Activated naive CD4-positive, alpha-beta T cell treated with anti-CD3 and anti-CD28 coated beads for 36 hours (primary cell): ENCODE measurements at regions of chr6 and their contacts with region 1.

Region 1: GRCh38 chr6:90444160-90444714 is 142.6 kb downstream of the MAP3K7 start:
- DNase-seq: no peak
- H3K4me3 Mint-ChIP-seq: peak overlapping the region; percentile 62
- H3K27ac Mint-ChIP-seq: peak overlapping the region; percentile 95
- H3K4me1 Mint-ChIP-seq: peaks cover 56% of the 10 kb centered on the region
- H3K27me3 Mint-ChIP-seq: no peaks in the 10 kb centered on the region

Region 2: GRCh38 chr6:89412071-89413005 is 1031.9 kb before region 1 on chr6 and contains the start of gene RRAGD:
- CTCF ChIA-PET with region 1: no interaction called
- intact Hi-C with region 1: no loop called
- DNase-seq: peak; percentile 67
- H3K4me3 Mint-ChIP-seq: peak within 1 kb of the TSS; percentile 91
- H3K27ac Mint-ChIP-seq: peak within 1 kb of the TSS; percentile 31
- H3K4me1 Mint-ChIP-seq: peaks cover 23% of the 10 kb centered on the region
- H3K27me3 Mint-ChIP-seq: peaks cover 4% of the 10 kb centered on the region
- total RNA-seq, gene RRAGD: 11.3 to 13.2 TPM

Region 3: DNA sequence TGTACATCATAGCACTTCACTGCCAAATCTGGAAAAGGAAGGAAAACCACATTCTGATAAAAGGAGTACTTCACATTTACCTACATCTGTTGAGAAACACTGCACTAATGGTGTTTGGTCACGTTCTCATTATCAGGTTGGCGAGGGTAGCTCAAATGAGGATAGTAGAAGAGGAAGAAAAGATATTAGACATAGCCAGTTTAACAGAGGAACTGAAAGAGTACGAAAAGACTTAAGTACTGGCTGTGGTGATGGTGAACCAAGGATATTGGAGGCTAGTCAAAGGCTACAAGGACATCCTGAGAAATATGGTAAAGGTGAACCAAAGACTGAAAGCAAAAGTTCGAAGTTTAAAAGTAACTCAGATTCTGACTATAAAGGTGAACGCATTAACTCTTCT is 582.0 kb before region 1 on chr6:
- CTCF ChIA-PET with region 1: no interaction called
- intact Hi-C with region 1: no loop called
- DNase-seq: no peak
- H3K4me3 Mint-ChIP-seq: no peak overlapping the region
- H3K27ac Mint-ChIP-seq: no peak overlapping the region
- H3K4me1 Mint-ChIP-seq: peaks cover 3% of the 10 kb centered on the region
- H3K27me3 Mint-ChIP-seq: no peaks in the 10 kb centered on the region

Region 4: GRCh38 chr6:90403489-90404381 is 40.5 kb before region 1 on chr6:
- CTCF ChIA-PET with region 1: interaction called, 3 read pairs
- intact Hi-C with region 1: loop called (anchors 1 kb)
- DNase-seq: no peak
- H3K4me3 Mint-ChIP-seq: peak overlapping the region; percentile 57
- H3K27ac Mint-ChIP-seq: peak overlapping the region; percentile 87
- H3K4me1 Mint-ChIP-seq: peaks cover 86% of the 10 kb centered on the region
- H3K27me3 Mint-ChIP-seq: no peaks in the 10 kb centered on the region

Region 5: GRCh38 chr6:90425161-90425641 is 19.0 kb before region 1 on chr6:
- CTCF ChIA-PET with region 1: interaction called, 8 read pairs
- intact Hi-C with region 1: loop called (anchors 1 kb)
- DNase-seq: peak; percentile 46
- H3K4me3 Mint-ChIP-seq: peak overlapping the region; percentile 48
- H3K27ac Mint-ChIP-seq: peak overlapping the region; percentile 92
- H3K4me1 Mint-ChIP-seq: peaks cover 41% of the 10 kb centered on the region
- H3K27me3 Mint-ChIP-seq: no peaks in the 10 kb centered on the region

Region 6: GRCh38 chr6:90466154-90466940 is 22.1 kb after region 1 on chr6:
- CTCF ChIA-PET with region 1: interaction called, 3 read pairs
- intact Hi-C with region 1: loop called (anchors 2 kb)
- DNase-seq: peak; percentile 73
- H3K4me3 Mint-ChIP-seq: no peak overlapping the region
- H3K27ac Mint-ChIP-seq: peak overlapping the region; percentile 90
- H3K4me1 Mint-ChIP-seq: peaks cover 82% of the 10 kb centered on the region
- H3K27me3 Mint-ChIP-seq: no peaks in the 10 kb centered on the region

Region 7: DNA sequence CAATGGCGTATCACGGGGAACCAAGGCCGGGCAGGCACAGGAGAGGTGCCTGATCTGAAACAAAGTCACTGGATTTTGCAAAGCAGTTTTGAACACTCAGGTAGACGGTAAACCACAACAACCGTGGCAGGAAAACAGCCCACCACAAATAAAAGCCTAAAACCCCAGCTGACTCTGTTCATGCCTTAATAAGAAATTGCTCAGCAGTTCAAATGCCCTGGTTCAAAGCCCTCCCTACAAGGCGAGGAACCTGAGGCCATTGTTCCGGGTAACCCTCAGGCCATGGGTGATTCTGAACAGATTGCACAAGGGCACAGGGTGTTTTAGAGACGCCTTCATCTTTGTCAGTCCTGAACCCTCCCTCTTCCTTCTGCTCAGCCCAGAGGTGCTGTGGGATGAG is 28.5 kb after region 1 on chr6:
- CTCF ChIA-PET with region 1: interaction called, 3 read pairs
- intact Hi-C with region 1: loop called (anchors 1 kb)
- DNase-seq: peak; percentile 61
- H3K4me3 Mint-ChIP-seq: peak overlapping the region; percentile 48
- H3K27ac Mint-ChIP-seq: peak overlapping the region; percentile 92
- H3K4me1 Mint-ChIP-seq: peaks cover 86% of the 10 kb centered on the region
- H3K27me3 Mint-ChIP-seq: no peaks in the 10 kb centered on the region